HCT116 (cell line): ENCODE measurements at regions of chr2 and their contacts with region 1.

Region 1: DNA sequence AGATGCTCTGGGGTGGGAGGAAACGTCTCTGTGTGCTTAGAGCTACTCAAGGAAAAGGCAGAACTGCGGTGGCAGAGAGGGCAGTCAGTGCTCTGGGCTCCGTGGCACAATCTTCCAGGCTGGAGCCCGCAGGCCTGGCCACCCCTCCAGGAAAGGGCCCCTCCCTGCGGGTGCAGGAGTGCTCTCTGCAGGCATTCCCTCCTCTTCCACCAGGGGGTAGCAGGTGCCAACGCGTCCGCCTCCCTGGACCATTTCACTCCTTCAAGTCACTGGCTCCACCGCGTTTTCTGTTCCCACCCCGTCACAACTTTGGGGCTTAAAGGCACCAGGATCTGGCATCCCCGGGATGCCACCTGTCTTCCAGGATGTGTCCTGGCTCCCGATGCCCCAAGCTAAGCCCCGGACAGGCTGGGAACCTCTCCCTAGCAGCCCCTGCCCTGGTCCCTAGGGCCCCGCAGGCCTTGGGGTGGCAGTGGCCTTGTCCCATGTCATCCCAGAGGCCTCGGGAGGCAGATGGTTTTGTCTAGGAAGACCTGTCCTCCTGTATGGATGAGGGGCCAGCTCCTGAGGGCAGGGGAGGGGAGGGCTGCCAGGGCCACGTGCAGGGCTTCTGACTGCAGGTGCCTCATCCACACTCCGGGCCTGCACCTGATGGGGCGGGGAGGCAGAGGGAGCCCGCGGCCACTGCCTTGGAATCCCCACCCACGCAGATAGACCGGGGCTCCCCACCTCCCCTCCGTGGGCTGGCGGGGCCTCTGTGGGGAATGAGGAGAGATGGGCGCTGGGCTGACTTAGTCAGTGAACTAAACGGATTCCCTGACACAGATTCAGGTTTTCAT is 26.4 kb downstream of the KCNIP3 start:
- DNase-seq: peak; percentile 55
- ATAC-seq: peak; percentile 97
- H3K4me3 ChIP-seq: no peak overlapping the region
- H3K27ac ChIP-seq: no peak overlapping the region
- H3K4me1 ChIP-seq: peaks cover 3 to 7% of the 10 kb centered on the region in 2 experiments; a peak in 2 of 4 replicates
- H3K27me3 ChIP-seq: no peaks in the 10 kb centered on the region
- CTCF ChIP-seq: peak; percentile 74 to 89 (median 74)
- POLR2A ChIP-seq: no peak
- RAD21 ChIP-seq: peak; percentile 83

Region 2: GRCh38 chr2:95062242-95063085 is 261.1 kb before region 1 on chr2:
- CTCF ChIA-PET with region 1: no interaction called
- POLR2A ChIA-PET with region 1: no interaction called
- RAD21 ChIA-PET with region 1: no interaction called
- intact Hi-C with region 1: no loop called
- DNase-seq: no peak
- ATAC-seq: peak; percentile 47; the same call in 1 of the 2 replicates
- H3K4me3 ChIP-seq: no peak overlapping the region
- H3K27ac ChIP-seq: no peak overlapping the region
- H3K4me1 ChIP-seq: no peaks in the 10 kb centered on the region
- H3K27me3 ChIP-seq: no peaks in the 10 kb centered on the region
- CTCF ChIP-seq: no peak
- POLR2A ChIP-seq: no peak
- RAD21 ChIP-seq: no peak

Region 3: GRCh38 chr2:95076784-95077529 is 246.6 kb before region 1 on chr2:
- CTCF ChIA-PET with region 1: no interaction called
- POLR2A ChIA-PET with region 1: no interaction called
- RAD21 ChIA-PET with region 1: no interaction called
- intact Hi-C with region 1: no loop called
- DNase-seq: peak; percentile 63
- ATAC-seq: peak; percentile 95
- H3K4me3 ChIP-seq: peak overlapping the region; percentile 50 to 63
- H3K27ac ChIP-seq: peak overlapping the region; percentile 25; the same call in 1 of the 2 replicates
- H3K4me1 ChIP-seq: peaks cover 8 to 19% of the 10 kb centered on the region in 2 experiments; a peak in 3 of 4 replicates
- H3K27me3 ChIP-seq: 0 out of 2 replicates have a peak, but pooled peaks cover 6% of the 10 kb centered on the region
- CTCF ChIP-seq: peak; percentile 82 to 85 (median 84)
- POLR2A ChIP-seq: no peak
- RAD21 ChIP-seq: peak; percentile 72

Region 4: GRCh38 chr2:95203911-95204310 is 119.7 kb before region 1 on chr2:
- CTCF ChIA-PET with region 1: no interaction called
- POLR2A ChIA-PET with region 1: no interaction called
- RAD21 ChIA-PET with region 1: interaction called in 1 of 2 experiments, 11 read pairs
- intact Hi-C with region 1: no loop called
- DNase-seq: no peak
- ATAC-seq: no peak
- H3K4me3 ChIP-seq: no peak overlapping the region
- H3K27ac ChIP-seq: no peak overlapping the region
- H3K4me1 ChIP-seq: peaks cover 0 to 5% of the 10 kb centered on the region in 2 experiments; a peak in 1 of 4 replicates
- H3K27me3 ChIP-seq: no peaks in the 10 kb centered on the region
- CTCF ChIP-seq: no peak
- POLR2A ChIP-seq: no peak
- RAD21 ChIP-seq: no peak

Region 5: DNA sequence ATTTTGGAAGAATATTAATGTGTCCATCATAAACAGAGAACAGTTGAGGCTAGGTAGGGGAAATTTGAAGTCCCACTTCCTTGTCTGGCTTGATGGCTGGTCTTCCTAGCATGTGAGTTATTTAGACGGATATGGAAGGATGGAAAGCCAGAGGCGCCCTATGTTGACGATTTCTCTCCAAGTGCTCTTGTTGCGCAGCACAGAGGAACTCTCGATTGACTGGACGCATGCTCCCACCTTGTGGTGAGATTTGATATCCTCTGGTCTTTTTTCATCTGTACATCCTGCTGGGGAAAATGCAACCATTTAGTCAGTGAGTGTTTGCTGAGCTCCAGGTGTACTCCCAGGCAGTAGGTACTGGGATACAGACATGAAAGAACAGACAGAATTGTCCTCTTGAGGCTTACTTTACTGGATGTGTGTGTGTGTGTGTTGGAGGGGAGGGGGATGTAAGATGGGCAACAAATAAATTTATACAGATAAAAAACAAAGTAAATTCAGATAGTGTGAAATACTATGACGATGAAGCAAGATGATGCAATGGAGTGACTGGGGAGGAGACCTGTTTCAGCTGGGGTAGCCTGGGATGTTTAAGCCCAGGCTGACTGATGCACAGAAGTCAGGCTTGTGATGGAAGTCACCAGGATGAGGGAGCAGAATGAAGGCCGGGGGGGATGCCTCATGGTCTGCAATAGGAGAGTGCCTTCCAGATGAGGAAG is 405.5 kb after region 1 on chr2:
- CTCF ChIA-PET with region 1: no interaction called
- POLR2A ChIA-PET with region 1: no interaction called
- RAD21 ChIA-PET with region 1: no interaction called
- intact Hi-C with region 1: loop called (anchors 2 kb)
- DNase-seq: peak; percentile 86
- ATAC-seq: peak; percentile 98
- H3K4me3 ChIP-seq: no peak overlapping the region
- H3K27ac ChIP-seq: no peak overlapping the region
- H3K4me1 ChIP-seq: peaks cover 0 to 4% of the 10 kb centered on the region in 2 experiments; a peak in 1 of 4 replicates
- H3K27me3 ChIP-seq: no peaks in the 10 kb centered on the region
- CTCF ChIP-seq: peak; percentile 47 to 91 (median 62); a peak in 5 of 6 replicates
- POLR2A ChIP-seq: no peak
- RAD21 ChIP-seq: peak; percentile 95